ENCODE measurements at regions of chr7 and their contacts with region 1.

Region 1: DNA sequence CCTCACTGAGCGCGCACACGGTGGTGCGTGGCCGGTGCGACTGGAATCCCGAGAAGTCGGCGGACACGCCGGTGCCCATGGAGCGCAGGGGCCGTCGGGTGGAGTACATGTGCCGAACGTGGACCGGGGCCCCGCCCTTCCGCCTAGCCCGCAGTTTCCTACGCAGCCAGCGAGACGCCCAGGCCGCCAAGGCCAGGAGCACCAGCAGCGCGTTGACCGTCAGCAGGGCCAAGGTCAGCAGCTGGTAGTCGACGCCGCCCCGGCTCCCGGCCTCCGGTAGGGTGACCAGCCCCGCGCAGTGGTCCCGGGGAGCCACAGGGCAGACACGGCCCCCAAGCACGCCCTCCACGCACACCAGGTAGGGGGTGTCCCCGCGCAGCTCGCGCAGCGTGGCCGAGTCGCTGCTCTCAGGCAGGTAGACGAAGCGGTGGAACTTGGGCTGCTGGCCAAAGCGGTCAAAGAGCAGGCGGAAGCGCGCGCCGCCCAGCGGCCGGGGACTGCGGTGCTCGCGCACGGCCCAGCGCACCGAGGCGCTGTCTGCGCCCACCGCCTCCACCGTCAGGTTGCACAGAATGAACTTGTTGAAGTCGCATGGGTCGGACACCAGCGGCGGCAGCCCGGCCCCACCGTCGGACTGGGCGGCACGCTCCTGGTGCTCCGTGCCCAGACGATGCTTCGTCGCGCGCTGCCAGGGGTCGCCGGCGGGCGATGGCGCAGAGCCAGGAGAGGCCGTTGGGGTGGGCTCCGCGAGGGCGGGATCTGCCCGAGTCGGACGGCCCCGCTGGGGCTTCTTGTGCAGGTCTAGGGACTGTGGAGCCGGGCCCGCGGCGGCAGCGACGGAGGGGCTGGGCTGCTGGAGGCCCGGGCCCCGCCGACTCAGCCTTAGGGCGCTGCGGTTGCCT is 2.2 kb downstream of the TRIL start:
- DNase-seq: peak in 1 of 2 experiments; percentile 92
- H3K4me3 ChIP-seq: peak overlapping the region; percentile 46 to 74 (median 62)
- H3K27ac ChIP-seq: no peak overlapping the region
- H3K4me1 ChIP-seq: peaks cover 3 to 21% (median 16%) of the 10 kb centered on the region in 4 experiments
- H3K27me3 ChIP-seq: peaks cover 11 to 46% (median 38%) of the 10 kb centered on the region in 4 experiments
- CTCF ChIP-seq: peak in 2 of 3 experiments; percentile 94 to 98; a peak in 3 of 4 replicates
- EP300 ChIP-seq: no peak
- POLR2A ChIP-seq: no peak; a peak in 1 of 3 replicates
- RAD21 ChIP-seq: peak; percentile 60 to 77

Region 2: GRCh38 chr7:28774261-28774988 is 181.5 kb before region 1 on chr7:
- CTCF ChIA-PET with region 1: no interaction called
- POLR2A ChIA-PET with region 1: no interaction called
- DNase-seq: no peak
- H3K4me3 ChIP-seq: no peak overlapping the region
- H3K27ac ChIP-seq: no peak overlapping the region
- H3K4me1 ChIP-seq: no peaks in the 10 kb centered on the region
- H3K27me3 ChIP-seq: no peaks in the 10 kb centered on the region
- CTCF ChIP-seq: no peak
- EP300 ChIP-seq: no peak
- POLR2A ChIP-seq: no peak
- RAD21 ChIP-seq: no peak

Region 3: DNA sequence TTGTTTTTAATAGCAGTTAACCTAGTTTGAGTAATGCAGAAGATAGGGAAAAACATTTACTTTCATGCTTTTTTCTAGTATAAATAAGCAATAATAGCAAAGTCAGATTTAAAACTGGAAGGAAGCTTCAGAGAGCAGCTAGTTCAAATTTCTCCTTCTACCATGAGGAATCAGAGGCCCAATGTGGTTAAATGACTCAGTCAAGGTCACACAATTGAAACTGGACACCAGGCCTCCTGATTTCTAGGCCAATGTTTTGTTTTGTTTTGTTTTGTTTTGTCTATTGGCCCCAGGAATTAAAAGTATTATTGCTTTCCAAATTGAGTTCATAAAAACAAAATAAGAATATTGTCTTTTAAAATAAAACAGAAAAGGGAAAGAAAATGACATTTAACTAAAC is 120.2 kb before region 1 on chr7:
- CTCF ChIA-PET with region 1: no interaction called
- POLR2A ChIA-PET with region 1: no interaction called
- DNase-seq: no peak
- H3K4me3 ChIP-seq: no peak overlapping the region
- H3K27ac ChIP-seq: no peak overlapping the region
- H3K4me1 ChIP-seq: no peaks in the 10 kb centered on the region
- H3K27me3 ChIP-seq: no peaks in the 10 kb centered on the region
- CTCF ChIP-seq: no peak
- EP300 ChIP-seq: no peak
- POLR2A ChIP-seq: no peak
- RAD21 ChIP-seq: no peak

Region 4: DNA sequence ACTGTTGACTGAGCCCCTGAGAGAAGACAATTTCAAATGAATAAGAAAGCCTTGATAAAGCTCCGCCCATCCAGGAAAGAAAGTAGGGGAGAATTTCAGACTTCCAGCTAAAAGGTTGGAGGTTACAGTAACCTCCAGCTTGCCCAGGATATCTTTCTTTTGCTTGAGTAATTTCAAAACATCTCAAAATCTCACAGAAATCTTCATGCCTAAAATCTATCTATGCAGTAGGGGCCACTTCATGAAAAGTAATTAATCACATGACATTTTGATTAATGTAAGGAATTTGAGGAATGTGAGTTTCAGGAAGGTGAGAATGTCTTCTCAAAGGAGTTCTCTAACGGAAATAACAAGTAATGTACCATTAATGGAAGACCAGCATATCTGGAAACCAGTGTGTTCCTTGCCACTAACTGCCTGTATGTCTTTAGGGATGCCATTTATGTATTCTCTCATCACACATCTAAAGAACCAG is 22.1 kb before region 1 on chr7:
- CTCF ChIA-PET with region 1: interaction called, 576 read pairs
- POLR2A ChIA-PET with region 1: interaction called, 5 read pairs
- DNase-seq: no peak
- H3K4me3 ChIP-seq: no peak overlapping the region
- H3K27ac ChIP-seq: no peak overlapping the region
- H3K4me1 ChIP-seq: peaks cover 1 to 12% (median 7%) of the 10 kb centered on the region in 4 experiments; a peak in 5 of 7 replicates
- H3K27me3 ChIP-seq: no peaks in the 10 kb centered on the region
- CTCF ChIP-seq: no peak
- EP300 ChIP-seq: no peak
- POLR2A ChIP-seq: no peak
- RAD21 ChIP-seq: no peak

Region 5: GRCh38 chr7:28976022-28976421 is 20.1 kb after region 1 on chr7:
- CTCF ChIA-PET with region 1: interaction called, 59 read pairs
- POLR2A ChIA-PET with region 1: interaction called, 7 read pairs
- DNase-seq: no peak
- H3K4me3 ChIP-seq: no peak overlapping the region
- H3K27ac ChIP-seq: no peak overlapping the region
- H3K4me1 ChIP-seq: peaks cover 3 to 8% (median 5%) of the 10 kb centered on the region in 4 experiments; a peak in 6 of 7 replicates
- H3K27me3 ChIP-seq: no peaks in the 10 kb centered on the region
- CTCF ChIP-seq: no peak
- EP300 ChIP-seq: no peak
- POLR2A ChIP-seq: no peak
- RAD21 ChIP-seq: no peak

Region 6: GRCh38 chr7:28998105-28998504 is 42.1 kb after region 1 on chr7:
- CTCF ChIA-PET with region 1: interaction called, 18 read pairs
- POLR2A ChIA-PET with region 1: no interaction called
- DNase-seq: no peak
- H3K4me3 ChIP-seq: no peak overlapping the region
- H3K27ac ChIP-seq: no peak overlapping the region
- H3K4me1 ChIP-seq: peaks cover 0 to 10% (median 6%) of the 10 kb centered on the region in 4 experiments; a peak in 4 of 7 replicates
- H3K27me3 ChIP-seq: no peaks in the 10 kb centered on the region
- CTCF ChIP-seq: no peak
- EP300 ChIP-seq: no peak
- POLR2A ChIP-seq: no peak
- RAD21 ChIP-seq: no peak

Region 7: GRCh38 chr7:29078311-29079260 is 122.6 kb after region 1 on chr7:
- CTCF ChIA-PET with region 1: interaction called, 13 read pairs
- POLR2A ChIA-PET with region 1: no interaction called
- DNase-seq: no peak
- H3K4me3 ChIP-seq: no peak overlapping the region
- H3K27ac ChIP-seq: no peak overlapping the region
- H3K4me1 ChIP-seq: no peaks in the 10 kb centered on the region
- H3K27me3 ChIP-seq: no peaks in the 10 kb centered on the region
- CTCF ChIP-seq: no peak
- EP300 ChIP-seq: no peak
- POLR2A ChIP-seq: no peak
- RAD21 ChIP-seq: no peak

Region 8: DNA sequence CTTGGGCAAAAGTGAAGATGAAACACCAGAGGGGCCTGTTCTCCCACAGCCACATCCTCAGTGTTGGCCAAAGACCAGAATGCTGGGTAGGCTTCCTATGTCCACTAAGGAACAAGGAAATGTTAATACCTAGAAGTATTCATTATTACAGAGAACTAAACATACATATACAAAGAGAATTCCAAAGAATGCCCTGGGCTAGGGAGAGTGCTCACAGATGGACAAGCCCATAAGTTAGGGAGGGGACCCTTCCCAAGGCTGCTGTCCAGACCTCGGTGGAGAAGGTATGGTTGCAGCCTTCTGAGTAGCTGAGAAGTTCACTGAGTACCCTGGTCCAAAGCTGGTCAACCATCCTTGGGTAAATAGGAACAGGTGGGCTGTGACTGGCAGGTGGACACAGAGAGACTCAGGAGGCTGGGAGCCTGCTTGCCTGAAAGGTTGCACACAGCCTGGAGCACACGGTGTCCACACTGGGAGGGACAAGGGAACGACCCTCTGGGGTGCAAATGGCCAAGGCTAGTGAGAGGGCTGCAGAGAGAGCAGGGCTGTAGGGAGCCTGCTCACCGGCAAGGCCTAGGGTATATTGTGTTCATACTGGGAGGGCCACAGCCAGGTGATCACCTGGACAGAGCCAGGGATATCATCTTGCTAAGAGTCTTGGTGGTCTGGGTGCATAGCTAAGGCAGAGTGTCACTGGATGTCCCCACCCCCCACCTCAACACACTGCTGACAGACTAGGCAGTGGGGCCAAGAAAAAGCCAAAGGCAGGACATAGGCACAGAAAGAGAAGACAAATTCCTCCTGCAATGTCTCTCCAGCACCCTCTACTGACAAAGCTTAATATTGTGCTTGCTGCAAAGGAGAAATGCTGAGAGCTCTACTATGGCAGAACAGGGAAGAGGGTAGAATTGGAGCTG is 150.0 kb after region 1 on chr7:
- CTCF ChIA-PET with region 1: interaction called, 136 read pairs
- POLR2A ChIA-PET with region 1: interaction called, 5 read pairs
- DNase-seq: peak in 1 of 2 experiments; percentile 21
- H3K4me3 ChIP-seq: no peak overlapping the region
- H3K27ac ChIP-seq: no peak overlapping the region
- H3K4me1 ChIP-seq: no peaks in the 10 kb centered on the region
- H3K27me3 ChIP-seq: no peaks in the 10 kb centered on the region
- CTCF ChIP-seq: peak in 2 of 3 experiments; percentile 89 to 90; a peak in 3 of 4 replicates
- EP300 ChIP-seq: no peak
- POLR2A ChIP-seq: no peak
- RAD21 ChIP-seq: peak; percentile 94 to 95

Region 9: DNA sequence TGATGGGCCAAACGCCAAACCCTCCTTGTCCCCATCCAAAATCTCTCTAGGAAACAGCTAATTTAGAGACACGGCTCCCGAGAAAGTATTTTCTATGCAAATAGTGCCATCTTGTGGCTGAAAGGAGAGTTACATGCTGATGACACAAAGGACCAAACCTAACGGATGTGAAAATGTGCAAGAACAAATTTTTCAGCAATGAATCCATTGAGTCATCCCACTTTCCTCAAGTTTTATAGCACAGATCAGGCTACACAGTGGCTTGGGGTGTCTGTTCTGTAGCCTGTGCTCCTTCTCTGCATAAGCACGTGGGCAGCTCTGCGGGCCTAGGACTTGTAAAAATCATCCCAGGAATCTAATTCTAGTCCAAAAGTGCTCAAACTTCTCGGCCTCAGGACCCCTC is 452.9 kb after region 1 on chr7:
- CTCF ChIA-PET with region 1: interaction called, 16 read pairs
- POLR2A ChIA-PET with region 1: no interaction called
- DNase-seq: peak; percentile 15 to 72
- H3K4me3 ChIP-seq: no peak overlapping the region
- H3K27ac ChIP-seq: no peak overlapping the region
- H3K4me1 ChIP-seq: peaks cover 2 to 11% (median 6%) of the 10 kb centered on the region in 4 experiments; a peak in 4 of 7 replicates
- H3K27me3 ChIP-seq: no peaks in the 10 kb centered on the region
- CTCF ChIP-seq: peak in 2 of 3 experiments; percentile 75 to 87; a peak in 3 of 4 replicates
- EP300 ChIP-seq: no peak
- POLR2A ChIP-seq: no peak
- RAD21 ChIP-seq: peak; percentile 96 to 98

Measured in H1 (cell line).